Caco-2 (cell line): ENCODE measurements at regions of chr2 and their contacts with region 1.

Region 1: GRCh38 chr2:100562732-100563720 is at the start of gene PDCL3:
- DNase-seq: peak; percentile 97 to 98
- H3K4me3 ChIP-seq: peak within 1 kb of the TSS; percentile 66
- H3K4me3 Mint-ChIP-seq: peak within 1 kb of the TSS; percentile 90
- H3K27ac Mint-ChIP-seq: peak within 1 kb of the TSS; percentile 92
- H3K4me1 ChIP-seq: no peaks in the 10 kb centered on the region
- H3K4me1 Mint-ChIP-seq: no peaks in the 10 kb centered on the region
- H3K27me3 ChIP-seq: no peaks in the 10 kb centered on the region
- H3K27me3 Mint-ChIP-seq: no peaks in the 10 kb centered on the region
- CTCF ChIP-seq: peak in 1 of 2 experiments; percentile 24
- total RNA-seq, gene PDCL3: 21.1 and 21.3 TPM in 2 replicates

Region 2: DNA sequence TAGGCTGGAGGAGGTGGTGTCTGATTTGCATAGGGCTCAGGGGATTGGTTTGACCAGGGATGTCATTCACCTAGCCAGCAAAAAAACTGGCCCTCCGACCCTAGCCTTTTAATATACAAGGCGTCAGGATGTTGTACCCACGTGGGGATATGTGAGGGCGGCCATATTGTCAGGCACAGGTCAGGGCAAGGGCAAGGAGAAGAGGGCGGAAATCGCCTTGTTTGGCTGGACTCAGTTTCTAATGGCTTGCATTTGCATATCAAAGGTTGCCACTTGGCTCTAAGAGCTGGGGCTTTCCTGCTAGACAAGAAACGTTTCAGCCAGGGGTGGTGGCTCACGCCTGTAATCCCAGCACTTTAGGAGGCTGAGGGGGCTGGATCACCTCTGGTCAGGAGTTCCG is 25.1 kb before region 1 on chr2:
- CTCF ChIA-PET with region 1: no interaction called
- POLR2A ChIA-PET with region 1: no interaction called
- intact Hi-C with region 1: no loop called
- DNase-seq: no peak
- H3K4me3 ChIP-seq: no peak overlapping the region
- H3K4me3 Mint-ChIP-seq: no peak overlapping the region
- H3K27ac Mint-ChIP-seq: no peak overlapping the region
- H3K4me1 ChIP-seq: no peaks in the 10 kb centered on the region
- H3K4me1 Mint-ChIP-seq: no peaks in the 10 kb centered on the region
- H3K27me3 ChIP-seq: no peaks in the 10 kb centered on the region
- H3K27me3 Mint-ChIP-seq: peaks cover 4% of the 10 kb centered on the region
- CTCF ChIP-seq: no peak

Region 3: DNA sequence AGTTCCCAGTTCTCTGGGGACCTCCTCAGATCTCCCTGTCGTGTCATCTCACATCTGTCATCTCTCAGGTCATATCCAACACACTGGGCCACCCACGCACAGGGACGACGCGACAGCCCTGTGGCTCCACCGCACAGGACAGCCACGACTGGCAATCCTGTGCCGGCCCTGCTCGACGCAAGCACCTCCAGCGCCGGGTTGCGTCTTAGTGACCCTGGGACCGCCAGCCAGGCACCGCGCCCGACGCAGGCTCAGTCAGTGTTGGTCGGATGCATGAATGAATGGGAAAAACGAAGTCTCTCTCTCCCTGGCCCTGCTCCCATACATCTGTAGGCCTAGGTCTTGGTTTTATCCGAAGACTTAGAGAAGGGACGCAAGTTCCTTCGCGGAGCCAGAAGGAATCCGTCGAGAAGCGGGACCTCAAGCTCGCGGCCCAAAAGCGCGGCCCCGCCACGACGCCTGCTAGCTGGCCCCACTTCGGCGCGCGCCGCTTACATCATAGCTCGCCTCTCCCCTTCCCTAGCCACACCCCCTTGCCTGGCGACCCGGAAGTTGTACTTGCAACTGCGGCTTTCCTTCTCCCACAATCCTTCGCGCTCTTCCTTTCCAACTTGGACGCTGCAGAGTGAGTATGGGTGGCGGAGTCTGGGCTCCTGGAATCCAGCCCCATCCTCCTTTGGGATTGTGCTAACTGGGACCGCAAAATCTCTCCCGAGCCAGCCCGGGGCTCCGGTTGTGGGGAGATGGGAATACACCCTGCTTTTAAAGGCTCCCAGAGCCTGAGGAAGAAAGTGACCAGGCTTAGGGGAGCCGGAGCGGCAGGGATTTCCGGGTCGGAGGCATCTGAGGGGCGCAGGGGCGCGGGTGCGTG is 438.9 kb after region 1 on chr2 and contains the start of gene RPL31:
- CTCF ChIA-PET with region 1: no interaction called
- POLR2A ChIA-PET with region 1: interaction called, 12 read pairs
- intact Hi-C with region 1: no loop called
- DNase-seq: peak; percentile 98
- H3K4me3 ChIP-seq: peak within 1 kb of the TSS; percentile 74
- H3K4me3 Mint-ChIP-seq: peak within 1 kb of the TSS; percentile 99
- H3K27ac Mint-ChIP-seq: peak within 1 kb of the TSS; percentile 98
- H3K4me1 ChIP-seq: peaks cover 13% of the 10 kb centered on the region
- H3K4me1 Mint-ChIP-seq: peaks cover 28% of the 10 kb centered on the region
- H3K27me3 ChIP-seq: no peaks in the 10 kb centered on the region
- H3K27me3 Mint-ChIP-seq: no peaks in the 10 kb centered on the region
- CTCF ChIP-seq: no peak
- total RNA-seq, gene RPL31: 2,026 and 2,057 TPM in 2 replicates